ENCODE measurements at regions of chr19 and their contacts with region 1.

Region 1: DNA sequence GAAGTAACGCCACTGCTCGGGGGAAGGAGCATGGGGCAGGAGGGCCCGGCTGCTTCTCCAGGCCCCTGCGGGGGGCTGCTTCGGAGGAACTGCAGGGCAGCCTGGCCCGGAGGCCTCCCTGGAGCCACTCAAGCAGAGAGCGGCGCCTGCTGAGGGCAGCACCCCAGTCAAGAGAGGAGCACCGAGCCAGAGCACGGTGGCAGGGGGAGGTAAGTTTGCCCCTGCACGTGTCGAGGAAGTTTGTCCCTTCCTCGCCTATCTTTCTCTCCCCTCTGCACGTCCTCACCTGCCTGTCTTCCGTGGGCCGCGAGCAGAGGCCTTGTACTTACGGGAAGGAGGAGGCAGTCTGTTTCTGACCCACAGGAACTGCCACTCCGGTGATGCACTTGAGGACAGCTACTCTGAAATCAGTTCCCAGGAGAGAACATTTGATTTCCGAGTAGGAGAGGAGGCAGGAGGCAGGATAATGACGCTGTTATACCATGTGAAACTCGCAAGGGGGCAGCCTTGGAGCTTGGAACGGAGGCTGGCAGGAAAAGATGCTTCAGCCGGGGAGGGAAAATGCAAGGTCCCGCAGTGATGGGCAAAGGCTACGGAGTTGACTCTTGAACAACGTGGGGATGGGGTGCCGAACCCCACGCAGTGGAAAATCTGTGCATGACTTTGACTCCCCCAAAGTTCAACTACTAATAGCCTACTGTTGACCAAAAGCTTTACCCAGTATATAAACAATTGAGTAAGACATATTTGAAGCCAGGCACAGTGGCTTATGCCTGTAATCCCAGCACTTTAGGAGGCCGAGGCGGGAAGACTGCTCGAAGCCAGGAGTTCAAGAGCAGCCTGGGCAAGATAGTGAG is 5.0 kb downstream of the FFAR1 start:
- DNase-seq: peak; percentile 90
- H3K4me3 Mint-ChIP-seq: no peak overlapping the region
- H3K27ac Mint-ChIP-seq: peak overlapping the region; percentile 71
- H3K4me1 Mint-ChIP-seq: peaks cover 23% of the 10 kb centered on the region
- H3K27me3 Mint-ChIP-seq: no peaks in the 10 kb centered on the region

Region 2: GRCh38 chr19:35342430-35342829 is 10.2 kb before region 1 on chr19:
- intact Hi-C with region 1: no loop called
- DNase-seq: no peak
- H3K4me3 Mint-ChIP-seq: no peak overlapping the region
- H3K27ac Mint-ChIP-seq: peak overlapping the region; percentile 59
- H3K4me1 Mint-ChIP-seq: peaks cover 25% of the 10 kb centered on the region
- H3K27me3 Mint-ChIP-seq: peaks cover 12% of the 10 kb centered on the region

Region 3: DNA sequence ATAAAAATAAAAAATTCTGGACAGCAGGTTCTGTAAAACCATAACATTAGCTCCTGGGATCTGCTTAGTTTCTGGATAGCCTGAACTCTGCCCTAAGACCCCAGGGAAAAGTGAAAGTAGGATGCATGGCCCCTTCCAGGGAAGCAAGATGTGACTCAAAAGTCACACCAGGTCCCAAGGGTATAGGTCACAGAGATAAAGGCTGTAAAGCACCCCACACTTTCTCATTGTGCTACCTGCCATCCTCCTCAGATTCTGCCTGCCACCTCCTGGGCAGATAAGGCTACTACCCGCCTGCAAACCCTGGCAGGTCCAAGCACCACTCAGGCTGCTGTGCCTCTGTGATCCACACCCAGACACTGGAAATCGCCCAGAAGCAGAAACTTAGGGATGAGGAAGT is 116.0 kb after region 1 on chr19:
- intact Hi-C with region 1: loop called (anchors 1 kb)
- DNase-seq: peak; percentile 89
- H3K4me3 Mint-ChIP-seq: no peak overlapping the region
- H3K27ac Mint-ChIP-seq: no peak overlapping the region
- H3K4me1 Mint-ChIP-seq: peaks cover 9% of the 10 kb centered on the region
- H3K27me3 Mint-ChIP-seq: peaks cover 7% of the 10 kb centered on the region

Region 4: DNA sequence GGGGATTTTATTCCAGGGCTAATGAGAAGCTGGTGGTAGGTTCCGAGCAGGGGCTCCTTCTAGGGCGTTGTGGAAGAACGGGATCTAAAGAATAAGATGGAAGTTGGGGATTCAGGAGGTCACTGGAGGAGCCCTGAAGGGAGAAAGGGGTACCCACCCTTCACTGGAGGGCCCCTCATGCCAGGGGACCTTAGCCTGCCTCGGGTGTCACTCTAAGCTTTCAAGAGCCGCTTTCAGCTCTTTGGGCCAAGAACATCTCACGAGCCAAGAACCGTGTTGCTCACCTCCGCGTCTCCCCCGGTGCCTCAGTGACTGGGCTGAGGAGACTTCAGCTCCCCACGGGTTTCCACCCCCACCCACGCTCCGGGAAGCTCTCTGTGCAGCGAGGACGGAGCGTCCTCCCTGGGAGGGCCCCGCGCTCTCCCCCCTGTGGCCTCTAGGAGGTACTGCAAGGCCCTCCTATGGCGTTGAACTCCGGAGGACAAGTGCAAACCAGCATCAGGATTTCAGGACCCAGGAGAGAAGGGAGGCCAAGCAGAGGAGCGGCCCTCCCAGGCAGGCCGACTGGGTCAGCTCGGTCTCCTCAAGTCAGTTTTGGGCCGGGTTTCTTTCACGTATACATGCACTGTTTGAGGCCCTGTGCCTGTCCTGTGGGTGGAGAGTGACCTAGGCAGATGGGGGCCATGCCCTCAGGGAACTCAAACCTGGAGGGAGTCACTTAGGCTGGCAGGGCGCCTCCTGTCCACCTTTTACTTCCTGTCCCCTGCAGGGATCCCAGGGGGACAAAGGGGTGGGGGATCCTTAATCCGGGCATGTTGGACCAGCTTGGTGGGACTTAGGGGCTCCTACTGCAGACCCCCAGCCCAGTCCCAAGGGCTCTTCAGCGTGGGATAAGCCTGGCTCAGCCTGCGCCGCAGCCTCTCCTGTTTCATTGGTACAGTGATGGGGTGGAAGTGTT is 142.7 kb after region 1 on chr19:
- intact Hi-C with region 1: loop called (anchors 1 kb)
- DNase-seq: peak; percentile 90
- H3K4me3 Mint-ChIP-seq: peak overlapping the region; percentile 29
- H3K27ac Mint-ChIP-seq: peak overlapping the region; percentile 57
- H3K4me1 Mint-ChIP-seq: peaks cover 7% of the 10 kb centered on the region
- H3K27me3 Mint-ChIP-seq: peaks cover 18% of the 10 kb centered on the region